Aorta (tissue), 5 donors: ENCODE measurements at regions of chr7 and their contacts with region 1.

Region 1: GRCh38 chr7:22110227-22110839 is 164.6 kb upstream of the CDCA7L start:
- DNase-seq: peak in 1 of 2 donors; percentile 59
- ATAC-seq: peak; percentile 85
- H3K4me3 ChIP-seq: no peak overlapping the region
- H3K27ac ChIP-seq: no peak overlapping the region
- H3K4me1 ChIP-seq: no peaks in the 10 kb centered on the region
- H3K27me3 ChIP-seq: no peaks in the 10 kb centered on the region

Region 2: GRCh38 chr7:22001345-22002004 is 108.9 kb before region 1 on chr7:
- intact Hi-C with region 1: no loop called
- DNase-seq: no peak
- ATAC-seq: peak; percentile 63
- H3K4me3 ChIP-seq: no peak overlapping the region
- H3K27ac ChIP-seq: no peak overlapping the region
- H3K4me1 ChIP-seq: no peaks in the 10 kb centered on the region
- H3K27me3 ChIP-seq: no peaks in the 10 kb centered on the region

Region 3: GRCh38 chr7:22061775-22062174 is 48.6 kb before region 1 on chr7:
- intact Hi-C with region 1: no loop called
- DNase-seq: no peak
- ATAC-seq: no peak
- H3K4me3 ChIP-seq: no peak overlapping the region
- H3K27ac ChIP-seq: no peak overlapping the region
- H3K4me1 ChIP-seq: no peaks in the 10 kb centered on the region
- H3K27me3 ChIP-seq: no peaks in the 10 kb centered on the region

Region 4: DNA sequence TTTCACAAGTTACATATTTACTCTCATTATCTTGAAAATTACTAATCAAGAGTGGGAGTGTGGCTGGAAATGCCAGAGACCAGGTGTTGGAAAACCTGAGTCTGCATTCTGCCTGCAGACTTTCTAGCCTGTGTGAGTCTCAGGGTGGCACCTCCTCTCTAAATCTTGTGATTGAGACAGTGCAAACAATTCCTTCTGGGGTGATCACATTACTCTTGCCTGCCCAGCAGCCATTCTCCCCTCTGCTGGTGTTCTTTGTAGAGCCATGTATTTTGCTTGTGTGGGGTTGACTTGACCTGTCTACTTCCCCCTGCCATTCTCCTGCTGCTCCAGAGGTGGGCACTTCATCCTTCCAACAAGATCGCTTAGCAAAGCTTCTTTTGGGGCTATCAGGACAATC is 145.5 kb after region 1 on chr7:
- intact Hi-C with region 1: loop called (anchors 2 kb)
- DNase-seq: no peak
- ATAC-seq: peak; percentile 46
- H3K4me3 ChIP-seq: no peak overlapping the region
- H3K27ac ChIP-seq: no peak overlapping the region
- H3K4me1 ChIP-seq: no peaks in the 10 kb centered on the region
- H3K27me3 ChIP-seq: no peaks in the 10 kb centered on the region

Region 5: DNA sequence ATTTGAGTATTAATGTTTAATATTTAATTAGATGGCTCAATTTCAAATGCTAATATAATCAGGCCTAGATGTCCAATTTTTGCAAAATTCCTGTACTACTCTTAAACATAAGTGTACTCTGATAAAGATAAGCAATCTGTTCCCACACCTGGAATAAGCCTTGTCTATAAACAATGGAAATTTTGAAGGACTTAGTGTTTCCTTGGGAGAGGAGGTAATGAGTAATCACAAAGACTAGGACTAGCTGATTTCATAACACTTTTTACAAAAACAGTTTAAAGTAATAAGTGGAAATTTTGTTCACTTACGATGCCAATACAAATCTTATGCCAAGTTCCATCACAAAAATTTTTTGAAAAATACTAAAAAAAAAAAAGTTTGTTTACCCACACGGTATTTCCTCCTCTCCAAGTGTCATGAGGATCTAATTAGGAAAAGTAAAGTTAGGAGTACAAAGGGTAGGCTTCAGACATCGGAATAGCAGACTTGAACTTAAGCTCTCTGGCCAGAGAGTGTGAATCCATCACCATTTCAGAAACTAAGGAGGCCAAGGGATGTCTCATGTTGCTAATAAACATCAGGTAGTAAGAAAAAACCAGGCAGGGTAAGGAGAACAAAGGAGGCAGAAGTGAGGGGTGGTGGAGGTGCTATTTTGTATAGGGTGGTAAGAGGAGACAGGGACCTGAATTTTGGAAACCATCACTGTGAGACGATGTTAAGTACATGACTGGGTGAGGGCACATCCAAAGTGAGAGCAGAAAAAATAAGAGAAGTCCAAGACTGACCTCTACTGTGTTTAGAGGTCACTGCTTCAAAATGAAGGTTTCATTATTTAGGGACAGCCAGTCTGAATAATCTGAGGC is 185.3 kb after region 1 on chr7:
- intact Hi-C with region 1: loop called in 1 of 2 experiments (anchors 5 kb)
- DNase-seq: no peak
- ATAC-seq: peak; percentile 60
- H3K4me3 ChIP-seq: no peak overlapping the region
- H3K27ac ChIP-seq: no peak overlapping the region
- H3K4me1 ChIP-seq: no peaks in the 10 kb centered on the region
- H3K27me3 ChIP-seq: no peaks in the 10 kb centered on the region

Region 6: GRCh38 chr7:22488643-22489462 is 378.5 kb after region 1 on chr7:
- intact Hi-C with region 1: loop called in 1 of 2 experiments (anchors 2 kb)
- DNase-seq: no peak
- ATAC-seq: peak; percentile 83
- H3K4me3 ChIP-seq: no peak overlapping the region
- H3K27ac ChIP-seq: no peak overlapping the region
- H3K4me1 ChIP-seq: no peaks in the 10 kb centered on the region
- H3K27me3 ChIP-seq: no peaks in the 10 kb centered on the region